ENCODE measurements at regions of chr6 and their contacts with region 1.

Region 1: DNA sequence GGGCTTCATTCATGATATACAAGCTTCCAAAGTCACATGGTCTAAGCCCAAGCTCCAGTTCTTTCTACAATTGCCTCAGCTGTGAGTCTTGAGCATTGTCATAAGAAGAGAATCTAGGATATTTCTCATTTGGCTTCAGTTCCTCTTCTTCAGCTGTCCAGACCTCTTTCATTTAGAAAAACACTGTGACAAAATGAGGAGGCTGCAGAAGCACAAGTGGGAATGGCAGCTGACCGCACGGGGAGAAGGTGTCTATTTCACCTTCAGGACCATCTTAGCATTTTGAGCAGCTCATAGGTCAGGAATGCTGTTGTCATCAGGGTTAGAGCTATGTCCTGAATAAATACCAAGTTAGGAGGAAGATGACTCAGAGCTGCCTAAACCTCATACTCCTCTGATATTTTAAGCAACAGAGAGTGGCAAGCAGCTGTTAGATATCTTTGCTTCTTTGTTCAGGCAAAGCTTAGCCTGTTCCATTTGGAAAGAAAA is 390.1 kb upstream of the CITED2 start:
- DNase-seq: peak in 1 of 2 donors; percentile 48
- ATAC-seq: peak; percentile 90 to 99 (median 96)
- H3K4me3 ChIP-seq: no peak overlapping the region
- H3K27ac ChIP-seq: peak overlapping the region; percentile 33 to 83 (median 78)
- H3K4me1 ChIP-seq: peaks cover 11 to 43% (median 30%) of the 10 kb centered on the region in 9 donors
- H3K27me3 ChIP-seq: no peaks in the 10 kb centered on the region
- CTCF ChIP-seq: no peak

Region 2: GRCh38 chr6:139655790-139656687 is 108.5 kb before region 1 on chr6:
- intact Hi-C with region 1: no loop called
- DNase-seq: no peak
- ATAC-seq: no peak
- H3K4me3 ChIP-seq: no peak overlapping the region
- H3K27ac ChIP-seq: no peak overlapping the region
- H3K4me1 ChIP-seq: no peaks in the 10 kb centered on the region
- H3K27me3 ChIP-seq: no peaks in the 10 kb centered on the region
- CTCF ChIP-seq: no peak

Region 3: GRCh38 chr6:139932671-139933070 is 168.1 kb after region 1 on chr6:
- intact Hi-C with region 1: no loop called
- DNase-seq: no peak
- ATAC-seq: no peak
- H3K4me3 ChIP-seq: no peak overlapping the region
- H3K27ac ChIP-seq: no peak overlapping the region
- H3K4me1 ChIP-seq: peaks cover 0 to 8% (median 0%) of the 10 kb centered on the region in 9 donors
- H3K27me3 ChIP-seq: no peaks in the 10 kb centered on the region
- CTCF ChIP-seq: no peak

Region 4: DNA sequence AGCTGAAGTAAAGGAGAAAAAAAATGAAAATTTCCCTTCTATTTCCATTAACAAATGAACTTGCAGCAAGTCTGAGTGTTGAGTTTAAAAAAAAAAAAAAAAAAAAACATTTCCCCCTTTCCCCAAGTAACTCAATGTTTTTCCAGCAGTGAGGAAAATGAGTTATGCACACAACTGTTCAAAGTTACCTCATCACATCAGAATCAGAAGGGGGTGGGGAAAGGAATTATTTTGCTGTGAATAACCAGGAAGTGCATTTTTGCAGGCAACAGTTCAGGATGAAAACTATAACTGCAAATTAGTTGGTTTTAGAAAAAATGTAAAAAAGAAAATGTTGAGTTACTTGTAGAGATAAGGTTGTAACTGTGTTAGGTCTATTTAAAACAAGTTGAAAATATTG is 178.8 kb after region 1 on chr6:
- intact Hi-C with region 1: no loop called
- DNase-seq: no peak
- ATAC-seq: peak in 7 of 8 donors; percentile 47 to 85 (median 73)
- H3K4me3 ChIP-seq: no peak overlapping the region
- H3K27ac ChIP-seq: peak overlapping the region in 3 of 10 donors; percentile 2 to 53 (median 24)
- H3K4me1 ChIP-seq: peaks cover 0 to 29% (median 8%) of the 10 kb centered on the region in 9 donors
- H3K27me3 ChIP-seq: no peaks in the 10 kb centered on the region
- CTCF ChIP-seq: no peak

Region 5: GRCh38 chr6:139965393-139965792 is 200.9 kb after region 1 on chr6:
- intact Hi-C with region 1: loop called in 1 of 10 experiments (anchors 10 kb)
- DNase-seq: no peak
- ATAC-seq: peak in 5 of 8 donors; percentile 22 to 51 (median 42)
- H3K4me3 ChIP-seq: no peak overlapping the region
- H3K27ac ChIP-seq: peak overlapping the region in 8 of 10 donors; percentile 2 to 67 (median 42)
- H3K4me1 ChIP-seq: peaks cover 0 to 43% (median 15%) of the 10 kb centered on the region in 9 donors
- H3K27me3 ChIP-seq: no peaks in the 10 kb centered on the region
- CTCF ChIP-seq: no peak

Measured in heart right ventricle (tissue), 16 donors.